ENCODE measurements at regions of chrX and their contacts with region 1.

Region 1: GRCh38 chrX:44542567-44543325 is at the start of gene FUNDC1:
- DNase-seq: peak; percentile 96
- ATAC-seq: peak; percentile 94
- H3K4me3 ChIP-seq: peak within 1 kb of the TSS; percentile 83
- H3K27ac ChIP-seq: peak within 1 kb of the TSS; percentile 29; the same call in 1 of the 2 replicates
- H3K4me1 ChIP-seq: 0 out of 2 replicates have a peak, but pooled peaks cover 13% of the 10 kb centered on the region
- H3K27me3 ChIP-seq: no peaks in the 10 kb centered on the region
- CTCF ChIP-seq: peak; percentile 58
- total RNA-seq, gene FUNDC1: 21.8 and 28.0 TPM in 2 replicates

Region 2: DNA sequence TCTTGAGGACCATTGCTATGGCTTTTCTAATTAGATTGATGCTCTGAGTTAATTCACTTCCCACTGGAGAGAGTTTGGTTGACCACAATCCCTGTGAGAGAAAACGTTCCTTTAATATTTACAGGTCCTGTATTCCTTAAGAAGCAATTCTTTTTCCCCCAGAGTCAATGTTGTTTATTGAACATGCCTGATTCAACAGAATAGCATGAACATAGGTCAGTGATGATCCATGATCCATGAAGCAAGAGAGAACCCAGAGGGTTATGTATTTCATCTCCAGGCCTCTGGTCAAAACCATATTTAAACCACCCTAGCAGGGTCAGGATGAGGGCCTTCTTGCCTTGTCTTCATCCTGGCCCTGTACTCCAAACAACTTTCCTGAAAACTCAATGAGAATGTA is 159.9 kb before region 1 on chrX:
- CTCF ChIA-PET with region 1: no interaction called
- POLR2A ChIA-PET with region 1: no interaction called
- intact Hi-C with region 1: loop called (anchors 10 kb)
- DNase-seq: no peak
- ATAC-seq: no peak
- H3K4me3 ChIP-seq: no peak overlapping the region
- H3K27ac ChIP-seq: no peak overlapping the region
- H3K4me1 ChIP-seq: no peaks in the 10 kb centered on the region
- H3K27me3 ChIP-seq: no peaks in the 10 kb centered on the region
- CTCF ChIP-seq: no peak

Region 3: DNA sequence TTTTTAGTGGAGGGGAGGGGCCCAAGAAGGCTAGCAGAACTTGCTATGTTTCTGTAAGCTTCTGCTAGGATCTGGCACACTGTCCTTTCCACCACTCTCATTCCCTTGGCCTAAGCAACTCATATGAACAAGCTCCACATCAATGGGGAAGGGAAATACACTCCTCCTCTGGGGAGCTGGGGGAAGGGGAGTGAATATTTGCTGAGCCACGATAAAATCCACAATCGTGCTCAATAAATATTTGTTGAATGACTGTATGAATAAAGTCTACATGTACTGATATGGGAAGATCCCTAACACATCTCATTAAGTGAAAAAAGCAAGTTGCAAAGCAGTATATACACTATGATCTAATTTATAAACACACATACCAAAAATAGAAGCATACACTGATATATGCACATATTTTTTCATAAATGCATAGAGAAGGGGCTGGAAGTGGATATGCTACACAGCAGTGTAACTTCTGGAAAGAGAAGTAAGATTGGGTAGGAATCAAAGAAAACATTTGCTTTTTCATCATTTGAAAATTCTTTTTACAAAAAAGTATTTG is 103.4 kb before region 1 on chrX:
- CTCF ChIA-PET with region 1: no interaction called
- POLR2A ChIA-PET with region 1: no interaction called
- intact Hi-C with region 1: loop called (anchors 2 kb)
- DNase-seq: peak; percentile 82
- ATAC-seq: peak; percentile 96
- H3K4me3 ChIP-seq: no peak overlapping the region
- H3K27ac ChIP-seq: peak overlapping the region; percentile 69
- H3K4me1 ChIP-seq: peaks cover 19% of the 10 kb centered on the region
- H3K27me3 ChIP-seq: no peaks in the 10 kb centered on the region
- CTCF ChIP-seq: no peak

Region 4: GRCh38 chrX:44494357-44494756 is 48.4 kb before region 1 on chrX:
- CTCF ChIA-PET with region 1: no interaction called
- POLR2A ChIA-PET with region 1: no interaction called
- intact Hi-C with region 1: no loop called
- DNase-seq: no peak
- ATAC-seq: no peak
- H3K4me3 ChIP-seq: no peak overlapping the region
- H3K27ac ChIP-seq: no peak overlapping the region
- H3K4me1 ChIP-seq: no peaks in the 10 kb centered on the region
- H3K27me3 ChIP-seq: no peaks in the 10 kb centered on the region
- CTCF ChIP-seq: no peak

Region 5: GRCh38 chrX:44945736-44946135 is 403.0 kb after region 1 on chrX:
- CTCF ChIA-PET with region 1: no interaction called
- POLR2A ChIA-PET with region 1: no interaction called
- intact Hi-C with region 1: loop called (anchors 10 kb)
- DNase-seq: peak; percentile 67
- ATAC-seq: peak; percentile 55
- H3K4me3 ChIP-seq: no peak overlapping the region
- H3K27ac ChIP-seq: no peak overlapping the region
- H3K4me1 ChIP-seq: peaks cover 31% of the 10 kb centered on the region
- H3K27me3 ChIP-seq: no peaks in the 10 kb centered on the region
- CTCF ChIP-seq: peak; percentile 73